Right ventricle myocardium inferior (tissue), 1 donor: ENCODE measurements at regions of chr12 and their contacts with region 1.

Region 1: DNA sequence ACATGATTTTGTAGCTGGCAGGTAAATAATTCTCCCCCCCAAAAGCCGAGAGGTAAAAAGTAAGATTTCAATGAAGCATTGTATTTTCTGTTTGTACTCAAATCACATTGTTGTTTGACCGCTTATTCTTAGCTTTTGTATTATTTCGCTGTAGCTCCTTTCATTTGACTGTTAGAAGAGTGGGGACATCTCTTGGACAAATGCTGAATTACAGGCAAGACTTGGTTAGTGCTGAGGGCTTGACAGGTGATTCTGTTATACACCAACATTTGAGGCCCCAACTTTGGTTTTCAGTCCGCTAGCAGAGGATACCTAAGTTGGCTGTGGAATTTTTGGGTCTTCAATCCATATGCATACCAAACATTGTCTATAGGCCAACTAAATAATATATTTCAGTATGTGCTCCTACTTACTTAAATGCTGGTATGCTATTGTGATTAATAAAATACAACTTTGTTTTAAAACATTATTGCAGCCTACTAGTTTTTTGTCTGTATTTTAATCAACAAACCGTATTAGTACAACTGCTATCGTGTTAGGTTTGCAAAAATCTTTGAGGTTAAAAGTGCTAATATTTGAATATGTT is 102.2 kb downstream of the ERC1 start:
- DNase-seq: no peak
- ATAC-seq: no peak

Region 2: DNA sequence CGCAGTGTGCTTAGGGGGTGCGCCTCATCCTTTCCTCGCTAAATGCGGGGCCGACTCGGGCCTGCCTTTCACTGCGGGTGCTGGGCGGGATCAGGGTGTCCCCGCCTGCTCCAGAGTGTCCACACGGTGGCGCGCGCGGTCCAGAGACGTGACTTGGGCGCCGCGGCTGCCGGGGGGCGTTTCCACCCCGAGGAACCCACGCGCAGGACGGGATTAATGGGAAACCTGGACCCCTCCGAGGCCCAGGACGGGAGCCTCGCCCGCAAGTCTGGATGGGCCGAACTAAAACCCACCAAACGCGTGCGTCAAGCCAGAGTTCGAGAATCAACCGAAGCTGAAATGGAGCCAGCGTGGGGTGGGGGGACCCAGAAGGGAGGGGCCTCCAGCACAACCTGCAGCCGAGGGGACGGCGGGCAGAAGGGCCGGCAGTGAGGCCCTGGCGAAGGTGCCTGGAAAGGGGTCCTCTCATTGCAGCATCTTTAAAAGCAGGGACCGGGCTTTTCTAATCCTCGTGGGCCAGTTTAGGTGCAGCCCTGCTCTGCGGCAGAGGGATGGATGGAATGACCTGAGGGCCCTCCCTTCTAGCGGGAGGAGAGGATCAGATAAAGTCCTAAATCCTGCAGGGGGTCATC is 523.3 kb before region 1 on chr12:
- intact Hi-C with region 1: loop called (anchors 10 kb)
- DNase-seq: peak; percentile 96
- ATAC-seq: peak; percentile 75

Region 3: GRCh38 chr12:990661-991349 is 102.5 kb before region 1 on chr12 and contains the start of gene ERC1:
- intact Hi-C with region 1: loop called (anchors 5 kb)
- DNase-seq: peak; percentile 95
- ATAC-seq: peak; percentile 96
- total RNA-seq, gene ERC1: 43.1 TPM